Activated B cell treated with CpG ODN at 0.5 μM for 24 hours (primary cell): ENCODE measurements at regions of chr14 and their contacts with region 1.

Region 1: GRCh38 chr14:77028384-77029231 is at the start of gene IRF2BPL:
- DNase-seq: peak; percentile 89
- ATAC-seq: peak; percentile 68
- H3K4me3 Mint-ChIP-seq: peak within 1 kb of the TSS; percentile 88
- H3K27ac Mint-ChIP-seq: peak within 1 kb of the TSS; percentile 93
- H3K4me1 Mint-ChIP-seq: peaks cover 50% of the 10 kb centered on the region
- H3K27me3 Mint-ChIP-seq: no peaks in the 10 kb centered on the region
- CTCF ChIP-seq: no peak
- total RNA-seq, gene IRF2BPL: 14.0 and 14.5 TPM in 2 replicates

Region 2: GRCh38 chr14:76546426-76547221 is 482.0 kb before region 1 on chr14:
- CTCF ChIA-PET with region 1: no interaction called
- POLR2A ChIA-PET with region 1: no interaction called
- intact Hi-C with region 1: no loop called
- DNase-seq: no peak
- ATAC-seq: no peak
- H3K4me3 Mint-ChIP-seq: no peak overlapping the region
- H3K27ac Mint-ChIP-seq: no peak overlapping the region
- H3K4me1 Mint-ChIP-seq: no peaks in the 10 kb centered on the region
- H3K27me3 Mint-ChIP-seq: peaks cover 6% of the 10 kb centered on the region
- CTCF ChIP-seq: no peak

Region 3: DNA sequence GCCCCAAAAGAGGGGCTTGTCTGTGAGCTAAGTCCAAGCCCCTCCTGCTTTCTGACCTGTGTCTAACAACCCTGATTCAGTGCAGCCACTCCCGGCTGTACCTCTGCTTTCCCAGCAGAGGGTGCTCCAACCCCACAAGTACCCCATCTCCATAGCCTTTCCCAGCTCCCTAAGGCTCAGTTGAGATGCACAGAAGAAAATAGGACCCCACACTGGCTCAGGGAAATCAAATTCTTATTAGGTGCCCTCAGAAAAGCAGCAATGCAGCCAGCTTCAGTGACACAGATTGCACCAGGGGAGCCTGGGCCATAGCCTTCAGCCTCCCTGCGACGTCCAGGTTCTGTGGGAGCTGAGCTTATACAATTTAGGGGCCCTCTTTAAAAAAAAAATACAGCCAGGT is 152.5 kb before region 1 on chr14:
- CTCF ChIA-PET with region 1: interaction called, 3 read pairs
- POLR2A ChIA-PET with region 1: interaction called, 11 read pairs
- intact Hi-C with region 1: no loop called
- DNase-seq: no peak
- ATAC-seq: peak; percentile 54
- H3K4me3 Mint-ChIP-seq: no peak overlapping the region
- H3K27ac Mint-ChIP-seq: no peak overlapping the region
- H3K4me1 Mint-ChIP-seq: no peaks in the 10 kb centered on the region
- H3K27me3 Mint-ChIP-seq: no peaks in the 10 kb centered on the region
- CTCF ChIP-seq: no peak

Region 4: DNA sequence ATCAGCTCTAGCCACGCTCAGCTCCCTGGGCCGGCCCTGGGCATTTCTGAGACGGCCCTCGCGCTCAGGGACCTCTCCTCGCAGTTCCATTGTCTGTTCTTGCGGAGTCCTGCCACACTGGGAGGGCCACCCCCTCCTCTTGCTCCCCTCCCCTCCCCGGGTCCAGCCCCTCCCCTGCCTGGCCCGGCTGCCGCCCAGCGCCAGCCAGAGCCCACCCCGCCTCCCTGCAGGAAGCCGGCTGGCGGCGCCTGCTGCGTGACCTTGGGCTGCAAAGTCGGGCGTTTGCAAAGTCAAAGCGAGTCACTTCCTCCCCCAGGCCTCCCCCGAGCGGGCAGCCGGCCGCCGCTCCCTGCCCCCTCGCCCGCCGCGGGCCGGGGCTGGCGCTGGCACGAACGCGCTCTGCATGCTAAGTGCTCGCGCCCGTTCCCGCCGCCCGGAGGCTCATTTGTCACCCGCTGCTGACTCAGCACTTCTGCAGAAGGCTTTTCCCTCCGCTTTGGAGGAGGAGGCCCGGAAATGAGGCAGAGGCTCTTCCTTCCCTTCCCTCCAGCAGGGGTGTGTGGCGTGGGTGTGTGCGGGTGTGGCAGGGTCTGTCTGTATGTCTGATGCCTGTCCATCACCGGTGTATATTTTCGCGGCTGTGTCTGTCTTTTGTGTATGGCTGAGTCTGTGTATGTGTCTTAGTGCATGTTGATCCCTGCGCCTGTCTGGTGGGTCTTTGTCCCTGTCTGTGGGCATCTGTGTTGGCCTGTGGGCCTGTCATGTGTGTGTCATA is 72.1 kb before region 1 on chr14:
- CTCF ChIA-PET with region 1: interaction called, 10 read pairs
- POLR2A ChIA-PET with region 1: interaction called, 149 read pairs
- intact Hi-C with region 1: loop called (anchors 1 kb)
- DNase-seq: peak; percentile 75
- ATAC-seq: peak; percentile 68
- H3K4me3 Mint-ChIP-seq: peak overlapping the region; percentile 86
- H3K27ac Mint-ChIP-seq: peak overlapping the region; percentile 94
- H3K4me1 Mint-ChIP-seq: peaks cover 75% of the 10 kb centered on the region
- H3K27me3 Mint-ChIP-seq: no peaks in the 10 kb centered on the region
- CTCF ChIP-seq: no peak

Region 5: DNA sequence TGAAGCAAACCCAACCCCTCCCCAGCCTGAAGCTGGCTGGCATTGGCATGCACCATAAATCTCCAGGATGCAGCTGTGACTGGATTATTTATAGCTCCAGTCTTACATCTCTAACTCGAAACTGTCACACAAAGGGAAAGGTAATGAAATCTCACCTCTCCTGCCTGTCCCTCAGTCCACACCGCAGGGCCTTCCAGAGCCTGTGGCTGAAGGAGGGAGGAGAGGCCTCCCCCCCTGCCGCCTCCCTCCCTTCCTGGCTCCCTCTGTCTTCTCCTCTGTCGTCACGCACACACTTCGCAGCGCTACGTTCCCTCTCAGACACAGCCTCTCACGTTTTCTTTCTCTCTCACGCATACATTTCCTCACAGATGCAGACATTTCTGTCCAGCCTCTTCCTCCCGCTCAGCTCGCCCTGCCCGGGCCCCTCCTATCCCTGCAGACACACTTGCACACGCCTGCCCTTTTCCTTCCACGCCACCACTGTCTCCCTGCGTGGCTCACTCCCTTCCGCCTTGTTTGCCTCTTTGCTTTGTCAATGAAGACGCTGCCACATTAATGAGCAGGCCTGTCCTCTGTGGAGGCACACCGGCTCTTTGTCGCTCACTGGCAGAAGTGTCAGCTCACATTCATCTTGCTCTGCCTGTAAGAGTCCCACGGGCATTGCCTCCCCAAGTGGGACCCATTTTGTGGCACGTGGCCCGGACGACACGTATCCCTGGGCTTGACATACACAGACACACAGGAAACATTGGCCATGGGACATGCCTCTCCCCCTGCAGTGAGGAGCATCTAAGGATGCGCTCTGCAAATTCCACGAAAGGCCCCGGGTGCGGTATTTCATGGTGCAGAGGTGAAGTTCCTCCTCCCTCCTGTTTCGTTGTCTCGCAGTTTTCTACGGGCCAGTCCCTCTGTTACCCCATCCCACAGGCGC is 28.0 kb before region 1 on chr14:
- CTCF ChIA-PET with region 1: no interaction called
- POLR2A ChIA-PET with region 1: interaction called, 12 read pairs
- intact Hi-C with region 1: no loop called
- DNase-seq: no peak
- ATAC-seq: peak; percentile 72
- H3K4me3 Mint-ChIP-seq: peak overlapping the region; percentile 80
- H3K27ac Mint-ChIP-seq: peak overlapping the region; percentile 62
- H3K4me1 Mint-ChIP-seq: peaks cover 32% of the 10 kb centered on the region
- H3K27me3 Mint-ChIP-seq: no peaks in the 10 kb centered on the region
- CTCF ChIP-seq: no peak

Region 6: GRCh38 chr14:77067632-77068514 is 39.3 kb after region 1 on chr14:
- CTCF ChIA-PET with region 1: interaction called, 3 read pairs
- POLR2A ChIA-PET with region 1: interaction called, 3 read pairs
- intact Hi-C with region 1: loop called (anchors 1 kb)
- DNase-seq: peak; percentile 48
- ATAC-seq: peak; percentile 66
- H3K4me3 Mint-ChIP-seq: no peak overlapping the region
- H3K27ac Mint-ChIP-seq: no peak overlapping the region
- H3K4me1 Mint-ChIP-seq: peaks cover 28% of the 10 kb centered on the region
- H3K27me3 Mint-ChIP-seq: peaks cover 3% of the 10 kb centered on the region
- CTCF ChIP-seq: no peak

Region 7: DNA sequence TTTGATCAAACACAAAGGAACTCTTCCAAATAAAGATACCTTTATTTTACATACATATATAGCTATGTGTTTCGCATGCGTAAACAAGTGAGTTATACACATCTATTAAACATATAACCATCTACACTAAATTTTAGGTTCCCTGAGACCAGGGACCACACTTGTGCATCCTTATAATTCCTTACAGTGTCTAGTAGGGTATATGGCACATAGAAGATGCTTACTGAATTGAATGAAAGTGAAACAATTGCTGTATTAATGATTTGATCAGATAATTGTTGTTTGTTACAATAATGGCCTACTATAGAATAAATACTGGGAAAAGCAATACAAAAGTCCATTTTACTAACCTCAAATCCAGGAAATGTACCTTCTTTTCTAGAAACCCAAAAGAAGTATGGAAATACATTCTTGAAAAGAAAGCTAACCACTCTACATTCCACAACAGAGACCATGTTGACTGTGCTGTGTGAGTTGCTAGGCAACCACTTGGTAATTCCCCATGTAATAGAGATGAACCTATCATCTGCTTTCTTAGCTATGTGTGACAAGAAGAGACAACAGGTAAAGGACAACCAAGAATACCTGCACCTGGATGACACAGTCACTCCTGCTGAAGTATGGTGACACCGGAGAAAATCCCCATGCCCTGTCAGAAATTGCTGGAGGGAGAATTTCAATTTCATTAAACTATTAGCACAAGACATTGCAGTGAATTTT is 57.6 kb after region 1 on chr14:
- CTCF ChIA-PET with region 1: no interaction called
- POLR2A ChIA-PET with region 1: no interaction called
- intact Hi-C with region 1: no loop called
- DNase-seq: no peak
- ATAC-seq: peak; percentile 81
- H3K4me3 Mint-ChIP-seq: no peak overlapping the region
- H3K27ac Mint-ChIP-seq: peak overlapping the region; percentile 26
- H3K4me1 Mint-ChIP-seq: peaks cover 22% of the 10 kb centered on the region
- H3K27me3 Mint-ChIP-seq: no peaks in the 10 kb centered on the region
- CTCF ChIP-seq: no peak

Region 8: GRCh38 chr14:77151918-77152588 is 123.4 kb after region 1 on chr14:
- CTCF ChIA-PET with region 1: no interaction called
- POLR2A ChIA-PET with region 1: no interaction called
- intact Hi-C with region 1: no loop called
- DNase-seq: no peak
- ATAC-seq: peak; percentile 45
- H3K4me3 Mint-ChIP-seq: no peak overlapping the region
- H3K27ac Mint-ChIP-seq: no peak overlapping the region
- H3K4me1 Mint-ChIP-seq: no peaks in the 10 kb centered on the region
- H3K27me3 Mint-ChIP-seq: peaks cover 33% of the 10 kb centered on the region
- CTCF ChIP-seq: no peak

Region 9: GRCh38 chr14:77219591-77219990 is 191.0 kb after region 1 on chr14:
- CTCF ChIA-PET with region 1: no interaction called
- POLR2A ChIA-PET with region 1: no interaction called
- intact Hi-C with region 1: no loop called
- DNase-seq: no peak
- ATAC-seq: no peak
- H3K4me3 Mint-ChIP-seq: no peak overlapping the region
- H3K27ac Mint-ChIP-seq: no peak overlapping the region
- H3K4me1 Mint-ChIP-seq: no peaks in the 10 kb centered on the region
- H3K27me3 Mint-ChIP-seq: peaks cover 20% of the 10 kb centered on the region
- CTCF ChIP-seq: no peak

Region 10: DNA sequence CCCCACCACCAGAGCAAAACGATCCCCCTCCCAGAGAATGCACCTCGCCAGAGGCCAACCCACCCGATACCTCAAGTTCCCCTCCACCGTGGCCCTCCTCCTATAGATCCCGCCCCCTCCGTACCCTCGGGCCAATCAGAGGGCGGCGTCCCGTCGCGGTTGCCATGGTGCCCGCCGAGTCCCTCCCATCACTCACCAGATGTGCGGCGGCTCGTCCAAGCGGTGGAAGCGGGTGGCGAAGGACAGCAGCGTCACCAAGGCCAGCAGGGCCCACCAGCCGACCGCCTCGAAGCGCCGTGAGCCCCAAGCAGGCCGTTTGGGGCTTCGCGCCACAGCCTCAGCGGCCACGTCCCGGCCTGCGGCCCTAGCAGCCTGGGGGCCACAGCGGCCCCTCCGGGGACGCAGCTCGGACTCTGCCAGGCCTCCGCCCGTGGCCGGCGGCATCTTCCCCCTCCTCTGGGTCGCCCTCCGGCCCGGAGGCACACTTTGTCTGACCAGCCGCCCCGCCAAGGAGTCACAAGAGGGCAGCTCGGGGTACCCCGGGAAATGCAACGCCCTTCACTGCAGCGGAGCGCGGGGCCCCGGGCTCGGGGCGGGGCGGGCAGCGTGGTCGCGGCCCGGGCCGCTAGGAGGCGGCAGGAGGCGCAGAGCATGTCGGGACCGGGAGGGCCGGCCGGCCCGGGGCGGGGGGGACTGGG is 291.8 kb after region 1 on chr14 and contains the start of gene POMT2:
- CTCF ChIA-PET with region 1: no interaction called
- POLR2A ChIA-PET with region 1: interaction called, 9 read pairs
- intact Hi-C with region 1: loop called (anchors 2 kb)
- DNase-seq: peak; percentile 93
- ATAC-seq: peak; percentile 54
- H3K4me3 Mint-ChIP-seq: peak within 1 kb of the TSS; percentile 99
- H3K27ac Mint-ChIP-seq: peak within 1 kb of the TSS; percentile 100
- H3K4me1 Mint-ChIP-seq: peaks cover 19% of the 10 kb centered on the region
- H3K27me3 Mint-ChIP-seq: no peaks in the 10 kb centered on the region
- CTCF ChIP-seq: no peak
- total RNA-seq, gene POMT2: 28.7 and 30.8 TPM in 2 replicates